ENCODE measurements at regions of chr11 and their contacts with region 1.

Region 1: GRCh38 chr11:2892215-2893020 is 6.8 kb upstream of the CDKN1C start:
- DNase-seq: peak; percentile 34 to 85 (median 62)
- ATAC-seq: peak; percentile 58 to 59
- H3K4me3 Mint-ChIP-seq: peak overlapping the region; percentile 62 to 87 (median 74)
- H3K27ac Mint-ChIP-seq: peak overlapping the region in 9 of 10 donors; percentile 70 to 91 (median 87)
- H3K4me1 Mint-ChIP-seq: peaks cover 15 to 33% (median 29%) of the 10 kb centered on the region in 4 donors
- H3K27me3 Mint-ChIP-seq: no peaks in the 10 kb centered on the region

Region 2: GRCh38 chr11:2532704-2533586 is 359.5 kb before region 1 on chr11:
- POLR2A ChIA-PET with region 1: interaction called, 57 read pairs
- DNase-seq: peak; percentile 81 to 95 (median 92)
- ATAC-seq: peak; percentile 88 to 90
- H3K4me3 Mint-ChIP-seq: peak overlapping the region; percentile 58 to 90 (median 78)
- H3K27ac Mint-ChIP-seq: peak overlapping the region in 7 of 10 donors; percentile 25 to 87 (median 80)
- H3K4me1 Mint-ChIP-seq: peaks cover 13 to 35% (median 27%) of the 10 kb centered on the region in 4 donors
- H3K27me3 Mint-ChIP-seq: no peaks in the 10 kb centered on the region

Region 3: DNA sequence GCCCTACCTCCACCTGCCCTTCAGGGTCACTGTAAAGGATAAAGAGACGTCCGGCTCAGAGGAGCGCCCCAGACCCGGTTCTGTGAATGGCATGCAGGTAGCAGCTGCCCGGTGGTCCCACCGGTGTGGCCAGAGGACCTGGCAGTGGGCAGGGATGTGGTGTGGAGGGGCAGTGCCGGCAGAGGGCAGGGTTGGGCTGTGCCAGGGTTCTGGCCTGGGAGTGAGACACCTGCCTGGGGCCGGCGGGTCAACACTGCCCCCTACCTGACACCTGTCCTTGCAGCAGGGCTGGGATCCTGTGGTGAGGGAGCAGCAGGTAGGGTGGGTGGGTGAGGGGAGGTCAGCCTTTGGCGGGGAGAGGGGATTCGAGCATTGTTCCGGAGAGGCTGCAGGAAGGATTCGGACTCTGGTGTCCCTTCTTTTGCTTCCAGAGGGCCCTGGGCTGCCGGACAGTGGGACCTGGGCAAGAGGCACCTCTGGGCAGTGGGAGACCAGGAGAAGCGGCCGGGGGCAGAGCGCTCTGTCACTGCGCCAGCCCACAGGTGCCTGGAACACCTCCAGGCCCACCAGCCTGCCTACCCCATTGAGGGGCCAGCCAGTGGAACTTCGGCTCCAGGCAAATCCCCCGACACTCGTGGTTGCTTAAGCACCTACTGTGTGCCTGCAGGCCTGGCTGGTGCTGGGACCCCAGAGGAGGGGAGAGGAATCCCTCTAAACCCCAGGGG is 38.4 kb after region 1 on chr11:
- POLR2A ChIA-PET with region 1: interaction called, 14 read pairs
- DNase-seq: peak in 1 of 10 donors; percentile 15
- ATAC-seq: no peak
- H3K4me3 Mint-ChIP-seq: peak overlapping the region in 9 of 10 donors; percentile 65 to 86 (median 79)
- H3K27ac Mint-ChIP-seq: peak overlapping the region in 3 of 10 donors; percentile 25 to 65 (median 27)
- H3K4me1 Mint-ChIP-seq: peaks cover 9 to 26% (median 22%) of the 10 kb centered on the region in 4 donors
- H3K27me3 Mint-ChIP-seq: peaks cover 7 to 30% (median 13%) of the 10 kb centered on the region in 5 donors

Measured in naive thymus-derived CD8-positive, alpha-beta T cell (primary cell).